A673 (cell line): ENCODE measurements at regions of chr7 and their contacts with region 1.

Region 1: GRCh38 chr7:79298145-79298760 is 155.2 kb downstream of the MAGI2 start:
- DNase-seq: peak; percentile 55
- H3K4me3 ChIP-seq: no peak overlapping the region
- H3K27ac ChIP-seq: no peak overlapping the region
- H3K4me1 ChIP-seq: no peaks in the 10 kb centered on the region
- H3K27me3 ChIP-seq: no peaks in the 10 kb centered on the region
- CTCF ChIP-seq: peak; percentile 79

Region 2: GRCh38 chr7:78260826-78261225 is 1037.4 kb before region 1 on chr7:
- CTCF ChIA-PET with region 1: no interaction called
- POLR2A ChIA-PET with region 1: no interaction called
- intact Hi-C with region 1: no loop called
- DNase-seq: no peak
- H3K4me3 ChIP-seq: no peak overlapping the region
- H3K27ac ChIP-seq: no peak overlapping the region
- H3K4me1 ChIP-seq: no peaks in the 10 kb centered on the region
- H3K27me3 ChIP-seq: peaks cover 14% of the 10 kb centered on the region
- CTCF ChIP-seq: no peak

Region 3: DNA sequence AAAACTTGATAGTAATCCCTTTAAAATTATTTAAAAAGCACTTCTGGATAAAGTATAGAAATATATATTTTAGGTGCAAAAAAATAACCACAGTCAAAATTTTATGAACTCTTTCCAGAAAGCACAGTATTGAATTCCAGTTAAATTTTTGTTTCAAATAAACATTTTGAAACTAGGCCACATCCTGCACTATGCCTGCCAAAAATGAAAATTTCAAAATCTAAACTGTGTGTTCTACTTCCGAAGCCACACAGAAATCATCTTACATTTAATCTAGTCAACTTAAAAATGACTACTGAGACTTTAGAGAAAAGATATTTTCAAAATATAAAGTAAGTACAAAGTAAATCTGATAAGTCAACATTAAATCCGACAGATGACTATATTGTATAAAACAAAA is 105.2 kb after region 1 on chr7:
- CTCF ChIA-PET with region 1: no interaction called
- POLR2A ChIA-PET with region 1: no interaction called
- intact Hi-C with region 1: no loop called
- DNase-seq: no peak
- H3K4me3 ChIP-seq: no peak overlapping the region
- H3K27ac ChIP-seq: no peak overlapping the region
- H3K4me1 ChIP-seq: no peaks in the 10 kb centered on the region
- H3K27me3 ChIP-seq: peaks cover 18% of the 10 kb centered on the region
- CTCF ChIP-seq: no peak

Region 4: GRCh38 chr7:79968077-79968648 is 669.9 kb after region 1 on chr7:
- CTCF ChIA-PET with region 1: no interaction called
- POLR2A ChIA-PET with region 1: no interaction called
- intact Hi-C with region 1: no loop called
- DNase-seq: no peak
- H3K4me3 ChIP-seq: no peak overlapping the region
- H3K27ac ChIP-seq: no peak overlapping the region
- H3K4me1 ChIP-seq: no peaks in the 10 kb centered on the region
- H3K27me3 ChIP-seq: peaks cover 3% of the 10 kb centered on the region
- CTCF ChIP-seq: no peak

Region 5: GRCh38 chr7:80047856-80048459 is 749.7 kb after region 1 on chr7:
- CTCF ChIA-PET with region 1: interaction called, 6 read pairs
- POLR2A ChIA-PET with region 1: no interaction called
- intact Hi-C with region 1: loop called (anchors 2 kb)
- DNase-seq: no peak
- H3K4me3 ChIP-seq: no peak overlapping the region
- H3K27ac ChIP-seq: no peak overlapping the region
- H3K4me1 ChIP-seq: no peaks in the 10 kb centered on the region
- H3K27me3 ChIP-seq: no peaks in the 10 kb centered on the region
- CTCF ChIP-seq: peak; percentile 54